GM12878 (cell line): ENCODE measurements at regions of chr6 and their contacts with region 1.

Region 1: GRCh38 chr6:28104392-28105244 is 19.8 kb upstream of the ZSCAN16 start:
- DNase-seq: peak; percentile 60
- ATAC-seq: peak; percentile 99
- H3K4me3 ChIP-seq: peak overlapping the region; percentile 71
- H3K27ac ChIP-seq: peak overlapping the region; percentile 72
- H3K4me1 ChIP-seq: no peaks in the 10 kb centered on the region
- H3K27me3 ChIP-seq: no peaks in the 10 kb centered on the region
- CTCF ChIP-seq: peak; percentile 47 to 80 (median 58)
- EP300 ChIP-seq: 0 out of 4 replicates have a peak, but pooled peaks of 1 of the 2 experiments have one; percentile 18
- POLR2A ChIP-seq: peak; percentile 98
- RAD21 ChIP-seq: 0 out of 2 replicates have a peak, but pooled peaks have one; percentile 28

Region 2: GRCh38 chr6:28080631-28081485 is 23.8 kb before region 1 on chr6:
- CTCF ChIA-PET with region 1: no interaction called
- POLR2A ChIA-PET with region 1: interaction called, 3 read pairs
- RAD21 ChIA-PET with region 1: interaction called, 4 read pairs
- SMC1A ChIA-PET with region 1: no interaction called
- in situ Hi-C with region 1: no loop called
- intact Hi-C with region 1: loop called (anchors 2 kb)
- DNase-seq: peak; percentile 91
- ATAC-seq: peak; percentile 81
- H3K4me3 ChIP-seq: peak overlapping the region; percentile 79
- H3K27ac ChIP-seq: peak overlapping the region; percentile 94
- H3K4me1 ChIP-seq: peaks cover 6% of the 10 kb centered on the region
- H3K27me3 ChIP-seq: no peaks in the 10 kb centered on the region
- CTCF ChIP-seq: no peak
- EP300 ChIP-seq: peak in 1 of 2 experiments; percentile 6; a peak in 1 of 4 replicates
- POLR2A ChIP-seq: no peak
- RAD21 ChIP-seq: no peak